Pancreas (tissue), 10 donors: ENCODE measurements at regions of chr10 and their contacts with region 1.

Region 1: DNA sequence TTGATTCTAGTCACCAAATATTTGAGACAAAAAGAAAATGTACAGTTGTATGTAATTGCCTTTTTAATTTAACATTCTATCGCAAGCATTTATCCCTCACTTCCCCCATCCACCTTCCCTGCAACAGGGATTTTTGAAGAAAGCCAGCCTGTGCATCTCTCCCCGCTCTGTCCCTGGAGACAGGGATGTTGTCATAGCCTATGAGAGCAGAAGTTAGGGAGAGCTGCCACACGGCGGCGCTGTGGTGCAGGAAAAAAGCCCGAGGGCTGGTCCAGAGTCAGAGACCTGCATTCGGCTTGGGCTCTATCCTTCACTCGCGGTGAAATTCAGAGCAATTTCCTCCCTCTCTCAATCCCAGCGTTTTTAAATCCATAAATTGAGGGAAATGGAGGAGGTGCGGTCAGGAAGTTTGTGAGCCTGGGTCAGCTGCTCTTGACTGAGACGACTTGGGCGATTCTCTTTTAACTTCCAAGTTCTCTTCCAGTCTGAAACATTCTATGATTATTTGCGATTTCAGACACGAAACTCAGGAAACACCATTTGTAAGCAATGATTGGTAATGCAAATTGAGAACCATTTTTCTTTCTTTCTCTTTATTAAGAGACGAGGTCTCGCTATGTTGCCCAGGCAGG is 17.5 kb downstream of the HKDC1 start:
- DNase-seq: peak; percentile 67 to 97 (median 87)
- ATAC-seq: peak; percentile 97 to 100 (median 98)
- H3K4me3 ChIP-seq: no peak overlapping the region
- H3K27ac ChIP-seq: no peak overlapping the region
- H3K4me1 ChIP-seq: no peaks in the 10 kb centered on the region
- H3K27me3 ChIP-seq: no peaks in the 10 kb centered on the region
- CTCF ChIP-seq: peak; percentile 71 to 89 (median 82)

Region 2: DNA sequence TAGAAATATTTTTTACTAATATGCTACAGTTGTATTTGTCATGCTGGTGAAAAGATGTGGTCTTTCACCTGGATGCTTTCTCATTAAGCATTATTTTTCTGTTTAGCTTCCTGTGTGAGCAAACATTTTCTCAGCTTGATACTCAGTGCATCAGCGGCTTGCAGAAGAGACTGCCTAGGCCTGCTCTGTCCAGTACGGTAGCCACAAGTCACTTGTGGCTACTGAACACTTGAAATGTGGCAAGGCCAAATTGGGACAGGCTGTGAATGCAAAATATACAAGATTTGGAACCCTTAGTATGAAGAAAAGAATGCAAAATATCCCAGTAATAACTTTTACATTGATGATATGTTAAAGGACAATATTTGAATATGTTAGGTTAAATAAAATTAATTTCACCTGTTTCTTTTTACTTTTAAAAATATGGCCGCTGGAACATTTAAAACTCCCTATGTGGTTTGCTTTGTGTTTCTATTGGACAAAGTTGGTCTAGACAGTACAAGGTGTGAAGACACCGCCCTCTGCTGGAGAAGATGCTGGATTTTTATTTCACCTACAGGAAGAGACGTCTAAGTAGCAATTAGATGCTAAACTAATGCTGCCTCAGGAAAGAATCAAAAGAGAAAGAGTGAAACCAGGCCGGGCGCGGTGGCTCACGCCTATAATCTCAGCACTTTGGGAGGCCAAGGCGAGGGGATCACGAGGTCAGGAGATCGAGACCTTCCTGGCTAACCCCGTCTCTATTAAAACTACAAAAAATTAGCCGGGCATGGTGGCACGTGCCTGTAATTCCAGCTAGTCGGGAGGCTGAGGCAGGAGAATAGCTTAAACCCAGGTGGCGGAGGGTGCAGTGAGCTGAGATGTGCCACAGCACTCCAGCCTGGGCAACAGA is 144.4 kb before region 1 on chr10:
- intact Hi-C with region 1: no loop called
- DNase-seq: peak in 4 of 6 donors; percentile 44 to 81 (median 70)
- ATAC-seq: peak; percentile 83 to 98 (median 92)
- H3K4me3 ChIP-seq: no peak overlapping the region
- H3K27ac ChIP-seq: no peak overlapping the region
- H3K4me1 ChIP-seq: no peaks in the 10 kb centered on the region
- H3K27me3 ChIP-seq: no peaks in the 10 kb centered on the region
- CTCF ChIP-seq: peak; percentile 55 to 71 (median 62)

Region 3: GRCh38 chr10:69123747-69124562 is 113.7 kb before region 1 on chr10 and contains the start of gene VPS26A:
- intact Hi-C with region 1: no loop called
- DNase-seq: peak; percentile 99 to 100 (median 100)
- ATAC-seq: peak; percentile 94 to 99 (median 96)
- H3K4me3 ChIP-seq: peak within 1 kb of the TSS; percentile 60 to 95 (median 88)
- H3K27ac ChIP-seq: peak within 1 kb of the TSS; percentile 93 to 99 (median 96)
- H3K4me1 ChIP-seq: peaks cover 0 to 16% (median 9%) of the 10 kb centered on the region in 3 donors
- H3K27me3 ChIP-seq: no peaks in the 10 kb centered on the region
- CTCF ChIP-seq: no peak
- total RNA-seq, gene VPS26A: 14.5 to 26.1 (median 18.8) TPM

Region 4: DNA sequence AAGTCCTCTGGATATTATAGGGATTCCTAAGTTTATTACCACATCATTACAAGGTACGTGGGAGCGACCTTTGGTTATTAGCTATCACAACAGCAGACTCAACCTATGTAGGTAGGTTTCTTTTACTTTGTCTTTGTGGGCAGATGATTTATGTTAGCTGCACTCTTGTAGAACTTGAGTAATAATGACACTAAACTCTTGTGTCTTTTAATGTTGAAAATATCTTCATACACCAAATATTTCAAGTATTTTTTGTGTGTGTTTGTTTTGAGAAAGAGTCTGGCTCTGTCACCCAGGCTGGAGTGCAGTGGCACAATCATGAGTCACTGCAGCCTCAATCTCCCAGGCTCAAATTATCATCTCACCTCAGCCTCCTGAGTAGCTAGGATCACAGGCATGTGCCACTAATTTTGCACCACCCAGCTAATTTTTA is 76.8 kb before region 1 on chr10:
- intact Hi-C with region 1: no loop called
- DNase-seq: no peak
- ATAC-seq: no peak
- H3K4me3 ChIP-seq: no peak overlapping the region
- H3K27ac ChIP-seq: no peak overlapping the region
- H3K4me1 ChIP-seq: no peaks in the 10 kb centered on the region
- H3K27me3 ChIP-seq: no peaks in the 10 kb centered on the region
- CTCF ChIP-seq: no peak

Region 5: DNA sequence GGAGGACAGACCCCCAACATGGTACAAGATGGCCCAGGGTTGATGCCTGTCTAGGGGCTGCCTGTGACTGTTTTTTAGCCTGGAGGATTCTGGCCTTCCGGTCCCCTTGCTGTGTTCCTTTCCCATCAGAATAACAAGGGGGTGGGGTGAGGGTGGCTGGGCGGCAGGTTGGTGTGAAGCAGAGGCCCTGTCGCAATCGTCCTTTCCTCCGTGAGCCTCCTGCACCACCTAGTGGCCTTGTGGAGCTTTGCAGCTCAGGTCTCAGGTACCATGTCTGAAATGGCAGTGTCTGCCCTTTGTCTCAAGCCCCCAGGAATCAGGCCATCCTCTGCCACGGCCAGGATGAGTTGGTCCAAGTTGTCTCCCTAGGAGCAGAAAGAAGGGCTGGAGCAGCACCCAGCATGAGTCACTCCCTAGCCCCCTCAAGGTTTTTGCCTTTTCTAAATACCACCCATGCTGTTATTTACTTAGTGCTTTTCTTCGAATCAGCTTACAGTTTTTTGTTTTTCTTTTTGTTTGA is 154.9 kb after region 1 on chr10:
- intact Hi-C with region 1: loop called (anchors 5 to 10 kb)
- DNase-seq: peak; percentile 72 to 92 (median 84)
- ATAC-seq: peak; percentile 96 to 100 (median 98)
- H3K4me3 ChIP-seq: no peak overlapping the region
- H3K27ac ChIP-seq: no peak overlapping the region
- H3K4me1 ChIP-seq: no peaks in the 10 kb centered on the region
- H3K27me3 ChIP-seq: no peaks in the 10 kb centered on the region
- CTCF ChIP-seq: peak; percentile 84 to 91 (median 86)

Region 6: GRCh38 chr10:69494626-69495558 is 257.2 kb after region 1 on chr10:
- intact Hi-C with region 1: loop called in 1 of 3 experiments (anchors 10 kb)
- DNase-seq: peak in 1 of 6 donors; percentile 24
- ATAC-seq: no peak
- H3K4me3 ChIP-seq: no peak overlapping the region
- H3K27ac ChIP-seq: no peak overlapping the region
- H3K4me1 ChIP-seq: no peaks in the 10 kb centered on the region
- H3K27me3 ChIP-seq: no peaks in the 10 kb centered on the region
- CTCF ChIP-seq: no peak